WTC11 (cell line): ENCODE measurements at regions of chr12 and their contacts with region 1.

Region 1: DNA sequence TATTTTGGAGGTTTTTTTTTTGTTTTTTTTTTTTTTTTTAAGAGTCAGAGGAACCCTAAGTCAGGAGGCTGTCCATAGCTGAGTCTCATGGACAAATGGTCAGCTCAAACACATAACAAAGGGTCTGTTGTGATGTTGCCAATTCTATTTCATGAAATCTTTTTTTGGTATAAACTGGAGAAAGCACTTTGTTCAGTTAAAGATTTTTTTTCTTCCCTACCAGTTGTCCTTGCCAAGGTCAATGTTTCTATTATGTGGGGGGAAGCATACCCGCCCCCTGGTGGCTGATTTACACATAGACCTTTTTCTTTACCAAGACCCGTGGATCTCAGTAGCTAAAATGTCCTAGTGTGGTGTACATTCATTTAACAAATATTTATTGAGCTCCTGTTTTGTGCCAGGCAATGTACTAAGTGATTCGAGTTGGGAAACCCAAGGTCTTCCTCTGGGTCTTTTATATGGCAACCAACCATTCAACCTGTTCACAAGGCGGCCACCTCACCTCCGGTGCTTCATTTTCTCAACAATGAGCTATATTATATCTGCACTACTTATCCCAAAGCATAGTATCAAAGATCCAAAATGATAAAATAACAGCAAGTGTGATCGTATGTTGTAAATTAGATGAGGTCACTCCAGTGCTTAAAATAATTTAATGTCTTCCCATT is 214.5 kb downstream of the PAH start:
- DNase-seq: peak; percentile 61
- ATAC-seq: peak; percentile 76
- H3K4me3 Mint-ChIP-seq: no peak overlapping the region
- H3K27ac Mint-ChIP-seq: no peak overlapping the region
- H3K4me1 Mint-ChIP-seq: peaks cover 8% of the 10 kb centered on the region
- H3K27me3 Mint-ChIP-seq: no peaks in the 10 kb centered on the region
- CTCF ChIP-seq: peak; percentile 71

Region 2: GRCh38 chr12:102513272-102513671 is 189.3 kb before region 1 on chr12:
- CTCF ChIA-PET with region 1: interaction called, 17 read pairs
- POLR2A ChIA-PET with region 1: no interaction called
- DNase-seq: no peak
- ATAC-seq: no peak
- H3K4me3 Mint-ChIP-seq: no peak overlapping the region
- H3K27ac Mint-ChIP-seq: no peak overlapping the region
- H3K4me1 Mint-ChIP-seq: peaks cover 10% of the 10 kb centered on the region
- H3K27me3 Mint-ChIP-seq: peaks cover 4% of the 10 kb centered on the region; the same call in 1 of the 2 replicates
- CTCF ChIP-seq: no peak

Region 3: GRCh38 chr12:102609996-102610395 is 92.6 kb before region 1 on chr12:
- CTCF ChIA-PET with region 1: no interaction called
- POLR2A ChIA-PET with region 1: no interaction called
- DNase-seq: no peak
- ATAC-seq: no peak
- H3K4me3 Mint-ChIP-seq: no peak overlapping the region
- H3K27ac Mint-ChIP-seq: no peak overlapping the region
- H3K4me1 Mint-ChIP-seq: peaks cover 35% of the 10 kb centered on the region
- H3K27me3 Mint-ChIP-seq: no peaks in the 10 kb centered on the region
- CTCF ChIP-seq: no peak

Region 4: DNA sequence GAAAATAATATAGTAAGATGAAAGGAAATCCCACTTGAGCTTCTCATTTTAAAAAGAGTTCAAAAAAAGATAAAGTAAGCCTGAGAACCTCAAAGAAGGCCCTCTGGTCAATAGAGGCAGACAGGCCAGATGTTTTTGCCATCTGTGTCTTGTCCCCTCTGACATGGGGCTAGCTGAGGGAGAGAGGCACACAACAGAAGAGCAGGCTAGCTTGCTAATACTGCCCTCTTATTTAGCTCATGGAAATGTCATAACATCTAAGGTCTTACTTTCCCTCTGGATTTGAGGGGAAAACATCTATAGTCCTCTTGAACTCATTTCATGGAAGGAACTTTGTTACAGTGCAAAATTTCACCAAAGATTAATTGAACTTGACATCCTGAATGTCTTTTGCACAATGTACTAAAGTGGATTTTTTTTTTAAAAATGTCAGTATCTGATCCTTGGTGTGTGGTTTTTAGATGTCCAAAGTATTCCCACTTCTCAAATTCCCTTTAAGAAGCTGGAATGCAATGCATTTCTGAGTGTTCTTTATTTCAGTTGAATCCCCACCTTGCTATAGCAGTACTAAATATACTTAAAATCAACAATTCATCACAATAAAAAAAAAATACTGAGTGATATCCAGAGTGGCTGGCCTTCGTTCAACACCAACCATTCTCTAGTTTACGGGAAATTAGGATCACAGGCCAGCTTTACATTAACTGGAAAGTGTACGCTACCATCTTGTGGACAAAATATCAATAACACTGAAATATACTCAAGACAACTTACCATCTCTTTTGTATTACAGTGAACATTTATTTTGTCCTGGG is 37.8 kb after region 1 on chr12:
- CTCF ChIA-PET with region 1: interaction called, 12 read pairs
- POLR2A ChIA-PET with region 1: no interaction called
- DNase-seq: no peak
- ATAC-seq: peak; percentile 71
- H3K4me3 Mint-ChIP-seq: no peak overlapping the region
- H3K27ac Mint-ChIP-seq: no peak overlapping the region
- H3K4me1 Mint-ChIP-seq: no peaks in the 10 kb centered on the region
- H3K27me3 Mint-ChIP-seq: no peaks in the 10 kb centered on the region
- CTCF ChIP-seq: no peak